Activated naive CD4-positive, alpha-beta T cell treated with anti-CD3 and anti-CD28 coated beads for 36 hours (primary cell): ENCODE measurements at regions of chr17 and their contacts with region 1.

Region 1: GRCh38 chr17:5065227-5065744 is 13.0 kb upstream of the ZFP3 start:
- DNase-seq: no peak
- H3K4me3 Mint-ChIP-seq: no peak overlapping the region
- H3K27ac Mint-ChIP-seq: no peak overlapping the region
- H3K4me1 Mint-ChIP-seq: no peaks in the 10 kb centered on the region
- H3K27me3 Mint-ChIP-seq: no peaks in the 10 kb centered on the region

Region 2: GRCh38 chr17:4759776-4760236 is 305.5 kb before region 1 on chr17:
- CTCF ChIA-PET with region 1: no interaction called
- intact Hi-C with region 1: no loop called
- DNase-seq: no peak
- H3K4me3 Mint-ChIP-seq: no peak overlapping the region
- H3K27ac Mint-ChIP-seq: no peak overlapping the region
- H3K4me1 Mint-ChIP-seq: no peaks in the 10 kb centered on the region
- H3K27me3 Mint-ChIP-seq: peaks cover 3% of the 10 kb centered on the region

Region 3: GRCh38 chr17:4908301-4908700 is 157.0 kb before region 1 on chr17:
- CTCF ChIA-PET with region 1: interaction called, 4 read pairs
- intact Hi-C with region 1: loop called (anchors 1 kb)
- DNase-seq: peak; percentile 34
- H3K4me3 Mint-ChIP-seq: no peak overlapping the region
- H3K27ac Mint-ChIP-seq: no peak overlapping the region
- H3K4me1 Mint-ChIP-seq: peaks cover 4% of the 10 kb centered on the region
- H3K27me3 Mint-ChIP-seq: no peaks in the 10 kb centered on the region

Region 4: DNA sequence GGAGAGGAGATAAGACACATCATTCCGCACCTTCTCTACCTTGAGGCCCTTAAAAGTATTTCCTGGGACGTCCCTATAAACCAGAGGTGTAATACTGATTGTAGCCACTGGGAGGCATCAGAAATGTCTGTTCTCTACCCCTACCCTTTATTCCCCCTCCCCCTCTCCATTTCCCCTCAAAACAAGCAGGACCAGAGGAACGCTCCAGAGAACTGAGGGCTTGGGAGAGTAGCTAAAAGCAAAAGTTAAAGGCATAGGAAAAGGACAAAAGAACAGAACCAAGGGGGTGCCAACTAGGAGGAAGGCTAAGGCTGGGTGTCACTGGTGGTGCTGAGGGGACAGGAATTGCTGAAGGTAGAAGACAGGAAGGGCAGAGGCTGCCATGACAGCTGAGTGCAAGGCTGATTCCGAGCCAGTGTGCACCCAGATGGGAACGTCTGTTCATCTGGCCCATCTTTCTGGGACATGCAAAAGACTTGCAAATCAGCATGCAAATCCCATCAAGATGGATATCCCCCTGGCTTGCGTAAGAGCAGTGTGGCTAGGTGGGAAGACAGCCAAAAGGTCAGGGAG is 84.6 kb before region 1 on chr17:
- CTCF ChIA-PET with region 1: interaction called, 27 read pairs
- intact Hi-C with region 1: loop called (anchors 1 kb)
- DNase-seq: peak; percentile 62
- H3K4me3 Mint-ChIP-seq: no peak overlapping the region
- H3K27ac Mint-ChIP-seq: peak overlapping the region; percentile 67
- H3K4me1 Mint-ChIP-seq: peaks cover 23% of the 10 kb centered on the region
- H3K27me3 Mint-ChIP-seq: no peaks in the 10 kb centered on the region

Region 5: GRCh38 chr17:5042157-5043022 is 22.9 kb before region 1 on chr17:
- CTCF ChIA-PET with region 1: interaction called, 14 read pairs
- intact Hi-C with region 1: no loop called
- DNase-seq: peak; percentile 49
- H3K4me3 Mint-ChIP-seq: peak overlapping the region; percentile 77
- H3K27ac Mint-ChIP-seq: peak overlapping the region; percentile 86
- H3K4me1 Mint-ChIP-seq: peaks cover 34% of the 10 kb centered on the region
- H3K27me3 Mint-ChIP-seq: no peaks in the 10 kb centered on the region